Activated T-helper 2 cell treated with anti-CD3 and anti-CD28 coated beads, Interferon-gamma antibody, Interleukin-2, Interleukin-4, amounts not matched to agents 10 μg/mL and 5 μg/mL and 100 μg/mL, durations not matched to agents 14 hours and 24 hours and 36 hours (primary cell): ENCODE measurements at regions of chr2 and their contacts with region 1.

Region 1: DNA sequence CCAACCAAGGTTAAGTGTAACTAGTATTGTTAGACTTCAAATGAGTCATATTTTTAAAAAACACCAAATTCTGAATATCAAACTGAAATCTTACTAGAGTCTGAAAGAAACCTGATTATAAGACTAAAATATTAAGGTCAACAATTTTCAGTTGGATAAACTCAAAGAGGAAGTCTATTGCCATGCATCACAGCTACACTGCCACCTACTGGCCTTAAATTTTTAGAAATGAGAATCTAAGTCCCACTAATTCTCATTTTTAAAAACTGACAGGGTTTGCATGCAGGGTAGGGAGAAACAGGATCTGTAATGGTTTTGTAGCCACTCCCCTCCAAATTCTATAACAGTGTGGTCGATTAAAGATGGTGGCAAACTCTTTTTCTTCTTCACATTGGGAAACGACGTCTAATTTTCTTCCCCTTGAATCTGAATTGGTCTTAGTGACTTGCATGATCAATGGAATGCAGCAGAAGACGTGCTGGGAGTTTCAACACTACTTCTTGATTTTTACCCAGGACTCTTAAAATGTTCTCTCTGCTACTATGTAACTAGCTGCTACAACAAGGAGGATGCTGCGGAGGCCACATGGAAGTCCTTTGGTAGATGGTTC is 176.1 kb upstream of the SESTD1 start:
- DNase-seq: no peak
- H3K4me3 Mint-ChIP-seq: no peak overlapping the region
- H3K27ac Mint-ChIP-seq: no peak overlapping the region
- H3K4me1 Mint-ChIP-seq: no peaks in the 10 kb centered on the region
- H3K27me3 Mint-ChIP-seq: peaks cover 13% of the 10 kb centered on the region

Region 2: GRCh38 chr2:178761759-178762371 is 678.9 kb before region 1 on chr2:
- intact Hi-C with region 1: loop called (anchors 10 kb)
- DNase-seq: no peak
- H3K4me3 Mint-ChIP-seq: no peak overlapping the region
- H3K27ac Mint-ChIP-seq: no peak overlapping the region
- H3K4me1 Mint-ChIP-seq: peaks cover 12% of the 10 kb centered on the region
- H3K27me3 Mint-ChIP-seq: no peaks in the 10 kb centered on the region

Region 3: DNA sequence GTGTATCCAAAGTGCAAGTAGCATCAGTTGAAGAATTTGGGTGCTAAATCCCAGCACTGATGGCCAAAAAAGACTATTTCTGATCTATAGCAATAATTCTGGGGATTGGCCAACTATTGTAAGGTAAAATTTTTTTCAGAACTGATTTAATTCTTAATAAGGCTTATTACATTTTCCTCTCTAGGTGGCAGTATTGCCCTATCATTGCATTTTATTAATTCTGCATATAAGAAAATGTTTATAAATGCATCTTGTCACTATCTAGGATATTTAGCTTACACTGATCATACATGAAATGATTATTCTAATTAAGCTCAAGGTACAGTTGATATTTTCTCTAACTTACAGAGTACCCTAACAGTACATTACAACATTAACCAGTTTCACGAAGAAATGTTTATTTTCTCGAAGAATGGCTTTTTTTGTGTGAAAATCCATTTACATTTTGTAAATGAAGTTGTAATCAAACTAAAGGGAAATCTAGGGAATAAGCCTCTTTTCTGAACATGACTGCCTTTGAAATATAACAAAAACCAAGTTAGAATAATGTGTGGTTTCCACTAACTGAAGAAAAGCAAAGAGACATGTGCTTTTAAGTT is 644.6 kb before region 1 on chr2:
- intact Hi-C with region 1: loop called (anchors 10 kb)
- DNase-seq: no peak
- H3K4me3 Mint-ChIP-seq: no peak overlapping the region
- H3K27ac Mint-ChIP-seq: no peak overlapping the region
- H3K4me1 Mint-ChIP-seq: peaks cover 6% of the 10 kb centered on the region
- H3K27me3 Mint-ChIP-seq: peaks cover 2% of the 10 kb centered on the region

Region 4: DNA sequence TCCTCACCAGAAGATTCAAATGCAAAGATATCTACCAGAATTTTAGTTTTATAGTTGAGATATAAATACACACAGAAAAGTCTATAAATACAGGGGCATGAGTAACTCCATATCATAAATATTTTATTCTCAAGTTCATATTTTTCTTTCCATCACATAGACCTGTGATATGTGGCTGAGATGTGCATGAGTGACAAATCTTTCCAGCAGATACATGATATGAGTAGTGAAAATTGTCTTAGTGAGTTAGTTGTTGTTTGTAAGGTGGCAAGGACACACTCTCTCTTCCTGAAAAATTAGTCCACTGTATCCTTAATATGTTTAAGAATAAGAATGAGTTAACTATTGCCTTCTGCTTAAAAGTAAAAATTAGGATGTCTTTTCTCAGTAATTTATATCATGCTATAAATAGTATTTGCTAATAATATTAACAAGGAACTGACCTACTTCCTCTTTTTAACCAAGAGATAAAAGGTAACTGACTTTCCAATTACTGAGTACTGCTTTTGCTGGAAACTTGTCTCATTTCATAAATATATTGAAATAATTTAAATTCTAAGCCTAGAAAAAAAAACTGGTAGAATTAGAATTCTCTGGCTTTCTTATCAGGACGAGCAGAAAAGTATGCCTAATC is 91.0 kb before region 1 on chr2:
- intact Hi-C with region 1: no loop called
- DNase-seq: no peak
- H3K4me3 Mint-ChIP-seq: no peak overlapping the region
- H3K27ac Mint-ChIP-seq: no peak overlapping the region
- H3K4me1 Mint-ChIP-seq: no peaks in the 10 kb centered on the region
- H3K27me3 Mint-ChIP-seq: peaks cover 1% of the 10 kb centered on the region

Region 5: GRCh38 chr2:179422037-179422643 is 18.6 kb before region 1 on chr2:
- intact Hi-C with region 1: no loop called
- DNase-seq: peak; percentile 15
- H3K4me3 Mint-ChIP-seq: no peak overlapping the region
- H3K27ac Mint-ChIP-seq: no peak overlapping the region
- H3K4me1 Mint-ChIP-seq: no peaks in the 10 kb centered on the region
- H3K27me3 Mint-ChIP-seq: peaks cover 29% of the 10 kb centered on the region